ENCODE measurements at regions of chr15 and their contacts with region 1.

Region 1: GRCh38 chr15:88657326-88658069 is 18.7 kb downstream of the ISG20 start:
- DNase-seq: peak; percentile 78
- H3K4me3 ChIP-seq: no peak overlapping the region; a peak in 1 of 4 replicates
- H3K27ac ChIP-seq: no peak overlapping the region
- H3K4me1 ChIP-seq: peaks cover 0 to 17% of the 10 kb centered on the region in 2 experiments; a peak in 1 of 4 replicates
- H3K27me3 ChIP-seq: no peaks in the 10 kb centered on the region
- CTCF ChIP-seq: peak; percentile 83
- EP300 ChIP-seq: no peak
- RAD21 ChIP-seq: peak; percentile 88

Region 2: DNA sequence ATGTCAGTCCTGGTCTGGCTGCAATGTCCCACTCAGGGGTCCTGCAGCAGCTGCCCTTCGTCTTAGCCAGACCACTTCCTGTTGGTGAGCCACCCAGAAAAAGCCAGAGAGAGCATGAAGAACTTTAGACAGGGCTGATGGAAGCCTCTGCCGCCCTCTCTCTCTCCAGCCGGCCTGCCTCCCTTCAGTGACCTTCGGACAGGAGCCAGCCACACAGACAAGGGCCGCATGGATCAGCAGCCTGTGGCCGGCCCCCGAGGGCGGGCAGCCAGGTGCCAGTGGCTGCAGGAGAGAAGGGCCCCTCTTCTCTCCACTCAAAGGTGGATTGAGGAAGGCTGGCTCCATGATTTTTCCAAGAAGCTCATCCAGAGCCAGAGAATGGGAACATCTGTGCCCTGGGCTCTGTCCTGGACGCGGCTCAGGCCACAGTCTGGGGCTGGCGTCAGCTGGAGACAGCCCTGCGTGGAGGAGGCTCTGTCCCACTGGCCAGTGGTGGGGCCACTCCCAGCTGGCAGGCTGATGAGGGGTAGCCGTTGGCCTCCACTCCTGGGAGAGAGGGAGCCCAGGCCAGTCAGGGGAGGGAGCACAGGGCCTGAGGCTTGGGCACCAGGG is 24.2 kb after region 1 on chr15:
- CTCF ChIA-PET with region 1: interaction called, 25 read pairs
- POLR2A ChIA-PET with region 1: no interaction called
- DNase-seq: peak; percentile 51
- H3K4me3 ChIP-seq: no peak overlapping the region
- H3K27ac ChIP-seq: no peak overlapping the region; a peak in 1 of 4 replicates
- H3K4me1 ChIP-seq: peaks cover 0 to 10% of the 10 kb centered on the region in 2 experiments; a peak in 1 of 4 replicates
- H3K27me3 ChIP-seq: no peaks in the 10 kb centered on the region; the same call in 1 of the 2 replicates
- CTCF ChIP-seq: no peak
- EP300 ChIP-seq: no peak
- RAD21 ChIP-seq: no peak

Region 3: DNA sequence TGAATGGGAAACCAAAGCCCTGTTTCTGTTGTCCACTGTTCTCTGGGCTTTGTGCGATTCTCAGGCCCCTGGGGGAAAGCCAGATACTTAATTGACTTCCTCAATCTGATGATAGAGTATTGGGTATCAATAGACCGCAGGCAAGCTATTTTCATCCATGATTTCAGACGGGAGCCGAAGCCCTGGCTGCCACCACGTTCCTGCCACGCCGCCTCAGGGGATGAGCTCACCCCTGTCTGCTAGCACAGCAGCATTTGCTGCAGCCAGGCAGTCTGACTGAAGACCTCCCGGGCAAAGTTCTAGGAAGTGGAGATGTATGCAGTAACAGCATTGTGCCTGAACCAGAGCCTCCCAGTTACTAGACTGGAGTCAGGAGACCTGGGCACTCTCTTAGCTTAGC is 51.2 kb after region 1 on chr15:
- CTCF ChIA-PET with region 1: interaction called, 10 read pairs
- POLR2A ChIA-PET with region 1: no interaction called
- DNase-seq: no peak
- H3K4me3 ChIP-seq: no peak overlapping the region
- H3K27ac ChIP-seq: no peak overlapping the region
- H3K4me1 ChIP-seq: no peaks in the 10 kb centered on the region; a peak in 1 of 4 replicates
- H3K27me3 ChIP-seq: no peaks in the 10 kb centered on the region
- CTCF ChIP-seq: no peak
- EP300 ChIP-seq: no peak
- RAD21 ChIP-seq: no peak

Region 4: GRCh38 chr15:88872106-88872505 is 214.6 kb after region 1 on chr15:
- CTCF ChIA-PET with region 1: interaction called, 11 read pairs
- POLR2A ChIA-PET with region 1: no interaction called
- DNase-seq: no peak
- H3K4me3 ChIP-seq: no peak overlapping the region
- H3K27ac ChIP-seq: no peak overlapping the region
- H3K4me1 ChIP-seq: no peaks in the 10 kb centered on the region
- H3K27me3 ChIP-seq: peaks cover 14% of the 10 kb centered on the region; the same call in 1 of the 2 replicates
- CTCF ChIP-seq: no peak
- EP300 ChIP-seq: no peak
- RAD21 ChIP-seq: no peak

Region 5: GRCh38 chr15:88904624-88905327 is 247.3 kb after region 1 on chr15:
- CTCF ChIA-PET with region 1: interaction called, 11 read pairs
- POLR2A ChIA-PET with region 1: no interaction called
- DNase-seq: peak; percentile 84
- H3K4me3 ChIP-seq: no peak overlapping the region; a peak in 1 of 4 replicates
- H3K27ac ChIP-seq: no peak overlapping the region
- H3K4me1 ChIP-seq: no peaks in the 10 kb centered on the region; a peak in 1 of 4 replicates
- H3K27me3 ChIP-seq: no peaks in the 10 kb centered on the region
- CTCF ChIP-seq: peak; percentile 98
- EP300 ChIP-seq: no peak
- RAD21 ChIP-seq: peak; percentile 88